Dendritic cell treated with granulocyte-macrophage colony-stimulating factor and Interleukin-4, amounts not matched to agents 40 ng/mL and 50 ng/mL, for 4 days (primary cell): ENCODE measurements at regions of chr6 and their contacts with region 1.

Region 1: GRCh38 chr6:161370880-161371279 is 97.0 kb upstream of the AGPAT4 start:
- H3K4me3 Mint-ChIP-seq: no peak overlapping the region
- H3K27ac Mint-ChIP-seq: no peak overlapping the region
- H3K4me1 Mint-ChIP-seq: peaks cover 46% of the 10 kb centered on the region
- H3K27me3 Mint-ChIP-seq: no peaks in the 10 kb centered on the region

Region 2: DNA sequence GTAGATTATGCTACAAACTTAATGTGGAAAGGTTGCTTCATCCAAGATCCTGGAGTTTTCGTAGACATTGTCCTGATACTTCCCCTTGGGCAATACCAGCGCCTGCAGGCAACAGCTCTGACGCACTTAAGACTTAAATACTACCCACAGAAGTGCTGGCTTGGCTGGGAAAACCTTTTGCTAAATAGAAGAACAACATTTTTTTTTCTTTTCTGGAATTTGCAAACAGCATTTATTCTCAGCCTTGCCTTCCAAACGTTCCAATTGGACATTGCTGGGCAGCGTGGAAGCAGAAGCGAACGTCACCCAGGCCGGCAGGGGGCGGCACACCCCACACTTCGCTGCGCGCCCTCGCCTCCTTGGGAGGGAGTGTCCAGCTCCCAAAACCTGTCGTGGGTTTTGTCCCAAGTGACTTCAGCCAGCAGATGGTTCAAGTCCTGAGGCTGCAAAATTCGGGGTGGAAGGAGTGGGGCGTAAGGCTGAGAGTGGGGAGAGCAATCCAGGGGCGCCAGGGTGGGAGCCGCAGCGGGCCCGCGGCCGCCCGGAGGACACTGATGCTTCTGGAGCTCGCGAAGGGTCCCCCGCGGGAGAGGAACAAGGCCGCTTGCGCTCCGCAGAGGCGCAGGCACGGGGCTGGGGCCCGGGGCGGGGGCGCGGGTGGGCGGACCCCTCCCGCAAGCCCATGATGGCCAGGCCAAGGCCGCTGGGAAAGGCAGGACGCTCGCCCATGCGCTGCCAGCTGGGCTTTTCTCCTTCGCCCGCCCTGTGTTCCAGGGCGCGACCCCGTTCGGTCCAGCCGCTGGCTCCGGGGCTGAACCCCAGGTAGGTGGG is 440.1 kb before region 1 on chr6:
- intact Hi-C with region 1: loop called (anchors 2 kb)
- H3K4me3 Mint-ChIP-seq: peak overlapping the region; percentile 72
- H3K27ac Mint-ChIP-seq: no peak overlapping the region
- H3K4me1 Mint-ChIP-seq: peaks cover 12% of the 10 kb centered on the region
- H3K27me3 Mint-ChIP-seq: peaks cover 42% of the 10 kb centered on the region

Region 3: GRCh38 chr6:161101517-161101916 is 269.4 kb before region 1 on chr6:
- intact Hi-C with region 1: loop called (anchors 1 kb)
- H3K4me3 Mint-ChIP-seq: no peak overlapping the region
- H3K27ac Mint-ChIP-seq: no peak overlapping the region
- H3K4me1 Mint-ChIP-seq: peaks cover 21% of the 10 kb centered on the region
- H3K27me3 Mint-ChIP-seq: no peaks in the 10 kb centered on the region

Region 4: GRCh38 chr6:161228921-161229591 is 141.8 kb before region 1 on chr6:
- intact Hi-C with region 1: loop called (anchors 5 kb)
- H3K4me3 Mint-ChIP-seq: peak overlapping the region; percentile 39
- H3K27ac Mint-ChIP-seq: peak overlapping the region; percentile 91
- H3K4me1 Mint-ChIP-seq: peaks cover 59% of the 10 kb centered on the region
- H3K27me3 Mint-ChIP-seq: no peaks in the 10 kb centered on the region

Region 5: GRCh38 chr6:161318456-161318855 is 52.4 kb before region 1 on chr6:
- intact Hi-C with region 1: no loop called
- H3K4me3 Mint-ChIP-seq: no peak overlapping the region
- H3K27ac Mint-ChIP-seq: no peak overlapping the region
- H3K4me1 Mint-ChIP-seq: no peaks in the 10 kb centered on the region
- H3K27me3 Mint-ChIP-seq: peaks cover 4% of the 10 kb centered on the region